ENCODE measurements at regions of chr19 and their contacts with region 1.

Region 1: GRCh38 chr19:10106100-10106936 is at the start of gene PPAN:
- ATAC-seq: peak; percentile 97 to 99 (median 98)
- H3K4me3 ChIP-seq: peak within 1 kb of the TSS; percentile 68 to 89 (median 75)
- H3K27ac ChIP-seq: peak within 1 kb of the TSS; percentile 93 to 95
- H3K4me1 ChIP-seq: peaks cover 4 to 7% of the 10 kb centered on the region in 2 donors
- total RNA-seq, gene PPAN: 27.2 to 92.1 (median 47.3) TPM

Region 2: GRCh38 chr19:9923440-9923839 is 182.9 kb before region 1 on chr19:
- in situ Hi-C with region 1: loop called in 1 of 9 experiments (anchors 10 kb)
- ATAC-seq: no peak
- H3K4me3 ChIP-seq: no peak overlapping the region
- H3K27ac ChIP-seq: no peak overlapping the region
- H3K4me1 ChIP-seq: no peaks in the 10 kb centered on the region

Region 3: GRCh38 chr19:10450853-10451609 is 344.7 kb after region 1 on chr19:
- in situ Hi-C with region 1: no loop called
- ATAC-seq: peak in 3 of 8 experiments; percentile 3 to 65 (median 15)
- H3K4me3 ChIP-seq: no peak overlapping the region
- H3K27ac ChIP-seq: no peak overlapping the region
- H3K4me1 ChIP-seq: peaks cover 19 to 33% of the 10 kb centered on the region in 2 donors